ENCODE measurements at regions of chr6 and their contacts with region 1.

Region 1: GRCh38 chr6:26216356-26216885 is 129.2 kb downstream of the HFE start:
- DNase-seq: peak; percentile 88
- ATAC-seq: peak; percentile 76
- H3K4me3 Mint-ChIP-seq: no peak overlapping the region
- H3K27ac Mint-ChIP-seq: no peak overlapping the region
- H3K4me1 Mint-ChIP-seq: peaks cover 2% of the 10 kb centered on the region
- H3K27me3 Mint-ChIP-seq: no peaks in the 10 kb centered on the region

Region 2: GRCh38 chr6:26175428-26176181 is 40.8 kb before region 1 on chr6:
- CTCF ChIA-PET with region 1: interaction called, 10 read pairs
- POLR2A ChIA-PET with region 1: interaction called, 16 read pairs
- intact Hi-C with region 1: loop called (anchors 1 to 2 kb)
- DNase-seq: peak; percentile 69
- ATAC-seq: peak; percentile 14
- H3K4me3 Mint-ChIP-seq: peak overlapping the region; percentile 30
- H3K27ac Mint-ChIP-seq: peak overlapping the region; percentile 80
- H3K4me1 Mint-ChIP-seq: peaks cover 33% of the 10 kb centered on the region
- H3K27me3 Mint-ChIP-seq: no peaks in the 10 kb centered on the region

Region 3: GRCh38 chr6:26204332-26205165 is 11.9 kb before region 1 on chr6:
- CTCF ChIA-PET with region 1: interaction called, 30 read pairs
- POLR2A ChIA-PET with region 1: interaction called, 246 read pairs
- intact Hi-C with region 1: loop called (anchors 1 kb)
- DNase-seq: peak; percentile 92
- ATAC-seq: peak; percentile 69
- H3K4me3 Mint-ChIP-seq: no peak overlapping the region
- H3K27ac Mint-ChIP-seq: no peak overlapping the region
- H3K4me1 Mint-ChIP-seq: peaks cover 20% of the 10 kb centered on the region
- H3K27me3 Mint-ChIP-seq: no peaks in the 10 kb centered on the region

Region 4: DNA sequence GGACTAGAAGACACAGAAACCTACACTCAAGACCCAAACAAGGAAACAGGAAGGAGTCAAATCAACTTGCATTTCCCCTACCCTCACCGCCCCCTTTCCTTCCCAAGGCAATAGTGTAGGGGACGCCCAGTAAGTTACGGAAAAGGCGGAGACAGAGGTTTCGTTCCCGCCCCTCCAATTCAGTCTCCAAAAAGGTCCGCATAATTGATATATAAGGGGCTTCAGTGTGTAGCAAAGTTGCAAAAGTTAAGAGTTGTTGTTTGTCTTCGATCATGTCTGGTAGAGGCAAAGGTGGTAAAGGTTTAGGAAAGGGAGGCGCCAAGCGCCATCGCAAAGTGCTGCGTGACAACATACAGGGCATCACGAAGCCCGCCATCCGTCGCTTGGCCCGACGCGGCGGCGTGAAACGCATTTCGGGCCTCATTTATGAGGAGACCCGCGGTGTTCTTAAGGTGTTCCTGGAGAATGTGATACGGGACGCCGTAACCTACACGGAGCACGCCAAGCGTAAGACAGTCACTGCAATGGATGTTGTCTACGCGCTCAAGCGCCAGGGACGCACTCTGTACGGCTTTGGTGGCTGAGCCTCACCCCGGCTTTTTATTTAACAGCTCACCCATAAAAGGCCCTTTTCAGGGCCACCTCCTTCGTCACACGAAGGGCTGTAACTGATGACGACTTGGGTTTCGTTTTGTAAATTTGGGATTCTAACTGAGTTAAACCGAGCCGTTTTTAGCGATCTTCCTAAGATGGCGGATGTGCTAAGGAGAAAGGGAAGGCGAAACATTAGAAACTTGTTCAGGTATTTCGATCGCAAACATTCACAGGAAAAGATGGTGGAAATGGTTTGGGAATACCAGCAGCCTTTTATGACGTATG is 24.0 kb after region 1 on chr6:
- CTCF ChIA-PET with region 1: interaction called, 5 read pairs
- POLR2A ChIA-PET with region 1: interaction called, 190 read pairs
- intact Hi-C with region 1: loop called in 1 of 2 experiments (anchors 2 kb)
- DNase-seq: peak; percentile 85
- ATAC-seq: peak; percentile 83
- H3K4me3 Mint-ChIP-seq: peak overlapping the region; percentile 83
- H3K27ac Mint-ChIP-seq: peak overlapping the region; percentile 98
- H3K4me1 Mint-ChIP-seq: peaks cover 26% of the 10 kb centered on the region
- H3K27me3 Mint-ChIP-seq: no peaks in the 10 kb centered on the region

Measured in activated CD4-positive, alpha-beta T cell treated with anti-CD3 and anti-CD28 coated beads for 36 hours (primary cell).